IMR-90 (cell line): ENCODE measurements at regions of chr5 and their contacts with region 1.

Region 1: GRCh38 chr5:59188419-59189225 is 605.7 kb downstream of the RAB3C start:
- DNase-seq: peak; percentile 70
- ATAC-seq: peak; percentile 88
- H3K4me3 ChIP-seq: no peak overlapping the region
- H3K27ac ChIP-seq: no peak overlapping the region
- H3K4me1 ChIP-seq: no peaks in the 10 kb centered on the region
- H3K27me3 ChIP-seq: no peaks in the 10 kb centered on the region
- CTCF ChIP-seq: peak; percentile 86
- POLR2A ChIP-seq: no peak
- RAD21 ChIP-seq: peak; percentile 92

Region 2: GRCh38 chr5:58886315-58887207 is 302.1 kb before region 1 on chr5:
- CTCF ChIA-PET with region 1: interaction called, 3 read pairs
- POLR2A ChIA-PET with region 1: no interaction called
- dilution Hi-C with region 1: no loop called
- in situ Hi-C with region 1: no loop called
- intact Hi-C with region 1: loop called (anchors 5 kb)
- DNase-seq: peak; percentile 57
- ATAC-seq: peak; percentile 87
- H3K4me3 ChIP-seq: no peak overlapping the region
- H3K27ac ChIP-seq: no peak overlapping the region
- H3K4me1 ChIP-seq: peaks cover 7% of the 10 kb centered on the region; the same call in 1 of the 2 replicates
- H3K27me3 ChIP-seq: peaks cover 2% of the 10 kb centered on the region
- CTCF ChIP-seq: peak; percentile 86
- POLR2A ChIP-seq: no peak
- RAD21 ChIP-seq: peak; percentile 78

Region 3: GRCh38 chr5:59199868-59200267 is 11.2 kb after region 1 on chr5:
- CTCF ChIA-PET with region 1: interaction called, 10 read pairs
- POLR2A ChIA-PET with region 1: no interaction called
- dilution Hi-C with region 1: no loop called
- in situ Hi-C with region 1: no loop called
- intact Hi-C with region 1: no loop called
- DNase-seq: no peak
- ATAC-seq: no peak
- H3K4me3 ChIP-seq: no peak overlapping the region
- H3K27ac ChIP-seq: no peak overlapping the region
- H3K4me1 ChIP-seq: no peaks in the 10 kb centered on the region
- H3K27me3 ChIP-seq: peaks cover 6% of the 10 kb centered on the region; the same call in 1 of the 2 replicates
- CTCF ChIP-seq: no peak
- POLR2A ChIP-seq: no peak
- RAD21 ChIP-seq: no peak

Region 4: DNA sequence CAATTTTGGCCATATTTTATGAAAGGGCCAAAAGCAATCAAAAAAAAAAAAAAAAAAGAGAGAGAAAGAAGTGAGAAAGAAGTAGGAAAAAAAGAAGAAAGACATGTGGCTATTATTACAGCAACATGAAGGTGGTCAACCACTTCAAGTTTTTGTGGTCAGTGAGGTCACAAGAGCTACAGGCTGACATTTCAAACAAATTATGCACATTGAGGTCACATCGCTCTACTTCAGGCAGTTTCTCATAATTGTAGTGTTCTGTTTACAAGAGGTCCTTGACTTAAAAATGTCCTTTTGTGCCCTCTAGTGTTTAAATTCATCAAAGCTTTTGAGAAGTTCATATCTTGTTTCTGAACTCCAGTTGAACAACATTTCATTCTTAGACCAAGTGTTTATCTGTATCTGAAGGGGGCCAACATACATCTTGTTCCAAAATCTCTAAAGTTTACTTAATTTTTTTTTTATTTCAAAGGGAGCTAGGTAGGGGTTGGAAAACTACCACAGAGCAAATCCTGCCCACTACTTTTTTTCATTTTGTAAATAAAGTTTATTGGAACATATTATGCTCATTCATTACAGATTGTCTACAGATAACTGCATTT is 191.8 kb after region 1 on chr5:
- CTCF ChIA-PET with region 1: interaction called, 22 read pairs
- POLR2A ChIA-PET with region 1: interaction called, 3 read pairs
- dilution Hi-C with region 1: no loop called
- in situ Hi-C with region 1: no loop called
- intact Hi-C with region 1: loop called (anchors 1 kb)
- DNase-seq: peak; percentile 71
- ATAC-seq: peak; percentile 77
- H3K4me3 ChIP-seq: no peak overlapping the region
- H3K27ac ChIP-seq: no peak overlapping the region
- H3K4me1 ChIP-seq: no peaks in the 10 kb centered on the region
- H3K27me3 ChIP-seq: no peaks in the 10 kb centered on the region; the same call in 1 of the 2 replicates
- CTCF ChIP-seq: peak; percentile 51
- POLR2A ChIP-seq: no peak
- RAD21 ChIP-seq: peak; percentile 52

Region 5: GRCh38 chr5:59673438-59674058 is 484.9 kb after region 1 on chr5:
- CTCF ChIA-PET with region 1: interaction called, 4 read pairs
- POLR2A ChIA-PET with region 1: no interaction called
- dilution Hi-C with region 1: no loop called
- in situ Hi-C with region 1: loop called (anchors 10 kb)
- intact Hi-C with region 1: loop called (anchors 5 kb)
- DNase-seq: peak; percentile 49
- ATAC-seq: peak; percentile 60
- H3K4me3 ChIP-seq: no peak overlapping the region
- H3K27ac ChIP-seq: no peak overlapping the region
- H3K4me1 ChIP-seq: no peaks in the 10 kb centered on the region
- H3K27me3 ChIP-seq: no peaks in the 10 kb centered on the region
- CTCF ChIP-seq: peak; percentile 78
- POLR2A ChIP-seq: no peak
- RAD21 ChIP-seq: peak; percentile 71

Region 6: DNA sequence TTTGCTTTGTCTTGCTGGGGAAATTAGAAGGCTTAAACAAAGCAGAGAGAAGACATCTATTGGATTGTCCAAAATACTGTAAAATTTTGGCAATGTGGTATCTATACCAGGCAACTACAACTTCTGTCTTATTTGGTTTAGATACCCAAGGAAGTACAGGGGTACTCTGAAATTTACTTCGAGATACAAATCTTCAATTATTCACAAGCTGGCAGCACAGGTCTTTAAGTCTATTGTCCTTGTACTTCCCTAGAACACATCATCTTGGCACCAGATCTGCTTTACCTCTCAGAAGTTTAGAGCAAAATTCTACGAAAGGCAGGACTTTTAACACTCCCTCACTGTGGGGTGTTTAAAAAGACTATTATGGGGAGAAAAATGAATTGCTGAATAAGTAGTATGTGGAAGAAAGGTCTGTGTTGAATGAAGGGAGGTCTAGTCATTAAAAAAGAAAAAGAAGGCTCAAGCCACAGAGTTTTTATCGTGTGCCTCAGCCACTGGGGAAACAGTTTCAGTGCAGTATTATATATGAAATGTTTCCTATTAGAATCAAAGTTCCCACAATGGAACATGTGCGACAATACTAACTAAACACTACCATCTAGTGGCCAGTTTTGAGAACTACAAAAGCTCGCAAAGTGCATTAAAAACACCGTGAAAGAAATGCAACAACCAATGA is 611.2 kb after region 1 on chr5:
- CTCF ChIA-PET with region 1: interaction called, 3 read pairs
- POLR2A ChIA-PET with region 1: no interaction called
- dilution Hi-C with region 1: no loop called
- in situ Hi-C with region 1: no loop called
- intact Hi-C with region 1: loop called (anchors 2 kb)
- DNase-seq: peak; percentile 57
- ATAC-seq: peak; percentile 81
- H3K4me3 ChIP-seq: no peak overlapping the region
- H3K27ac ChIP-seq: no peak overlapping the region
- H3K4me1 ChIP-seq: no peaks in the 10 kb centered on the region
- H3K27me3 ChIP-seq: no peaks in the 10 kb centered on the region; the same call in none of the 2 replicates
- CTCF ChIP-seq: peak; percentile 83
- POLR2A ChIP-seq: no peak
- RAD21 ChIP-seq: peak; percentile 78